Astrocyte of the cerebellum (primary cell): ENCODE measurements at regions of chr1 and their contacts with region 1.

Region 1: DNA sequence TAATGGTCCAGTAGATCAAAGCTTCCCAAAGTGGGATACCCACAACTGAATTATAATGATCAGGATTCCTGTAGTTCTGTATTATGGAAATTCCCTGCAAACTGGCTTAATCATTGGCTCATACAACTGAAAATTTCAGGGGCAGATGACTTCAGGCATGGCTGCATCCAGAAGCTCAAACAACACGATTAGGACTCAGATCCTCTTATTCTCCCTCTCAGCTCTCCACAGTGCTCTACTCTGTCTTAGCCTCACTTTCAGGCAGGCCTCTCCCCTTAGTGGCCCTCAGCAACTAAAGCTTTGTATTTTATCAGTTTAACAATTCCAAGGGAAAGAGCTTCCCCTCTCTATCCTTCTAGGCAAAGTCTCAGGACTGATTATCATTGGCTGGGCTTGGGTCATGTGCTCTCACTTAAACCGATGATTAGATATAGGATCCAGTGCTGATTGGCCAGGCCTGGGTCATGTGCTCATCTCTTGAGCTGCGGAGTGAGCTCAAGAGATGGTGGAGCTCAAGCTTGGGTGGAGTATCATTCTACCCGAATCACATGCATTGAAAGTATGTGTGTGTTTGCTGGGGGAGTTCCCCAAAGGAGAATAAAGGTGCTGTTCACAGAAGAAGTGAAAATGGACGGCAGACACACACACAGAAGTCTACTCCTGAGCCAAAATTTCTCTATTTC is 57.9 kb upstream of the RUNX3 start:
- DNase-seq: no peak
- H3K4me3 ChIP-seq: no peak overlapping the region
- CTCF ChIP-seq: no peak

Region 2: DNA sequence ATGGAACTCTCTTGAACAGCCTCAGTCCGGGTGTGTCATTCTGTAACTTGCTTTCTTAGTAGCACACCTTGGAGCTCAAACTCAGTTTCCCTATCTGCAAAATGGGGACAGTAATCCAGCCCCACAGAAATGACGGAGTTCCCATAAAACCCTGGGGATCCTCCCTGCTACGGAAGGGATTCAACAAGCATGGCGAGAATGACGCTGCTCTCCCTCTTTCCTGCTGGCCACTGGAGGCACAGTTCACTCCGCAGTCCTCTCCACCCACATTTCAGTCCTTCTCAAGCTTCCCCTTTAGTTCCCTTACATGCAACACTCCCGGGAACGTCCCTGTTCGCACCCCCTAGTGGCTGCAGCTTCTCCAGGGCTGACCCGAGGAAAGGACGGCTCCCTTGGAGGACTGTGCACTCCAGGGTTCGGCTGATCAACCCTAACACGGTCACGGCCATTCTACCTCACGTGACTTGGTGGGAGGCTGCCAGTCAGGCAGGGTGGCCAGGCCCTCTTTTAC is 78.6 kb before region 1 on chr1:
- in situ Hi-C with region 1: no loop called
- DNase-seq: peak; percentile 36
- H3K4me3 ChIP-seq: no peak overlapping the region
- CTCF ChIP-seq: peak; percentile 76

Region 3: GRCh38 chr1:24930204-24931145 is 57.5 kb before region 1 on chr1 and contains the start of gene RUNX3:
- in situ Hi-C with region 1: loop called (anchors 5 kb)
- DNase-seq: no peak
- H3K4me3 ChIP-seq: no peak within 1 kb of the TSS
- CTCF ChIP-seq: no peak

Region 4: DNA sequence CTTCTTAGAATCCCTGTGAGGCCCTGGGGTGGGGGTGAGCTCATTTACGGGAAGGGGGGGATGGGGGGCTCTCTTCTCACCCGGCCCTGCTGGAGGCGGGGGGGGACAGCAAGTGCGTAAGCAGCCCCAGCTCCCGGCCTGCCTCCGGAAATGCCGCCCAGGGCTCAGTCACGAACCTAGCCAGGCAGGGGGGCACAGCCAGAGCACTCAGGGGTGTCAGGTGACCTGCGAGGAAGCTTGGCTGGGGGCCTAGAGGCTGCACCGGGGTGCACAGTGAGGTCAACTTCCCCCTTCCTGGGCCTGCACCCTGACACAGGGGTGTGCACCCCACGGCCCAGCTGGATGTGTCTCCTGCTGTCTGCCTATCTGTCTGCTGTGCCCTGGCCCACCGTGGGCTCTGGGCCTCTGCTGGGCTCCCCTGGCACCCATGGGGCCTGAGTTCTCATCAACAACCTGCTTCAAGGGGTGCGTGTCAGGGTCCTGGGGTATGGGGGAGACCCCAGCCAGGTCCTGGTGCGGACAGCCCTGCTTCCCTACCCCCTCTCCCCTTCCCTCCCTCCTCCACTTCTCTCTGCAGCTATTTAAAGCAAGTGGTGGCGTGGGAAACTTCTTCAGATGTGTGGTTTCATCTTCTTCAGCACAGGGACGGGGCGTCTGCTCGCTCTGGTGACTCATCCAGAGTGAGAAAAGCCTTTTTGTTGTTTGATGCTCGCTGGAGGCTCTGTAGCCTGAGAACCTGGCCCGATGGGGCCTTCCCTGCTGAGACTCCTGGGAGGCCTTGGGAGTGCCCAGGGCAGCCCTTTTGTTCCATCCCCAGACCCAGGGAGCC is 34.6 kb after region 1 on chr1:
- in situ Hi-C with region 1: loop called (anchors 5 kb)
- DNase-seq: peak; percentile 92
- H3K4me3 ChIP-seq: no peak overlapping the region
- CTCF ChIP-seq: no peak

Region 5: GRCh38 chr1:25042331-25043227 is 54.6 kb after region 1 on chr1:
- in situ Hi-C with region 1: loop called (anchors 10 kb)
- DNase-seq: no peak
- H3K4me3 ChIP-seq: no peak overlapping the region
- CTCF ChIP-seq: no peak